ENCODE measurements at regions of chr1 and their contacts with region 1.

Region 1: DNA sequence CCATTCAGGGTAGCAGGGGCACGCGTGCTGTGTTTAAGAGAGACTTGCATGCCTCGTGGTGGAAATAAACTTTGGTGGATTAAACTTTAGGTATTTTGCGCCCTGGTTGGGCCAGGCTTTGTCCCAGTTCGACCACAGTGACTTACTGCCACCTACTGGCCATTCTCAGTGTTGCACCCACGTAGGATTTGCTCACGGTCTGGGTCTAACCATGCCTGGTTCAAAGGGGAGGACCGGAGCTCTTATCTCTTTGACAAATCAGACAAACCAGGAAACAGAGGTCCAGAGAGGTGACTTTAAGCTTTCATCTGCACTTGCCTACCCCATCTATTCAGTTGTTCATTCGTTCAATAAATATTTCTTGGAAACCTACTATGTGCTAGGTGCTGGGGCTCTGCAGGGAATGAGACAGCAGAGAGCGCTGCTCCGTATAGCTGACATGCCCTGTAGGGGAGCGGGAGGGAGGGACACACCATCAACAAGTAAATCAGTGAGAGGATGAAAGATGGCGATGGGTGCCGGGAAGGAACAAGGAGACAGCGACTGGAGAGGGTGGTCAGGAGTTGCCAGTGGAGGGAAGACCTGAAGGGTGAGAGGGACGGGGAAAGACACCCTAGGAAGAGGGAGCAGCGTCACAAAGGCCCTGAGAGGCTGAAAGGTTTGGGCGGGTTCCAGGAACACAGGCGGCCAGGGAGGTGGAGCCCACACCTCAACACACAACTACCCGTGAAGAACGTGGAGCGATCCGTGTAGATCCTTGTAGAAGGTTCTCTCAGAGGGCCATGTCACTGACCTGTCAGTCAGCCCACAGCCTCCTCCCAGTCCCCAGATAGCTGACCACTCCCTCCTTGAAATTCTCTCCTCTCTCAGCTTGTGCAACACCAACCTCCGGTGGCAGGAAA is 27.2 kb upstream of the TINAGL1 start:
- DNase-seq: peak; percentile 78 to 83 (median 81)
- H3K4me3 ChIP-seq: peak overlapping the region; percentile 38 to 74 (median 38)
- H3K4me3 Mint-ChIP-seq: peak overlapping the region; percentile 80 to 94
- H3K27ac ChIP-seq: peak overlapping the region; percentile 37 to 68
- H3K27ac Mint-ChIP-seq: peak overlapping the region; percentile 46 to 93 (median 76)
- H3K4me1 ChIP-seq: peaks cover 14 to 20% of the 10 kb centered on the region in 2 donors
- H3K4me1 Mint-ChIP-seq: peaks cover 17% of the 10 kb centered on the region
- H3K27me3 ChIP-seq: no peaks in the 10 kb centered on the region
- H3K27me3 Mint-ChIP-seq: peaks cover 0 to 3% (median 2%) of the 10 kb centered on the region in 3 donors
- CTCF ChIP-seq: peak; percentile 91

Region 2: DNA sequence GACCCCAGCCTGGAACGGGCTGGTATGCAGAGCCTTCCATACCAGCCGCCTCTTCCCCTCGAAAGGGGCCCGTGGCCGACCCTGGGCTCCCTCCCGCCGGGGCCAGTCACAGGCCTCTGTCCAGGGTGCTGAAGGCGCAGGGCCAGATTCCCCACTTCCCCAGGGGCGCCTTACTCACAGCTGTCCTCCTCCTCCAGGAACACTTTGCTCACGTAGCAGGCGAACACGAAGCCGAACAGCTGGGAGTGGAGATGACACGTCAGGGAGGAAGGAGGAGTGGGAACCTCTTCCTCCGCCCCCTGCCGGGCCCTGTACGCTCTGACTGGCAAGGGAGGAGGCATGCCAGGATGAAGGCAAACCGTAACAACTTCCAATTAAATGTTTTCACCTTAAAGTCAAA is 366.8 kb before region 1 on chr1:
- intact Hi-C with region 1: loop called in 1 of 2 experiments (anchors 10 kb)
- DNase-seq: peak; percentile 38 to 71 (median 46)
- H3K4me3 ChIP-seq: peak overlapping the region in 1 of 3 experiments; percentile 54
- H3K4me3 Mint-ChIP-seq: peak overlapping the region in 1 of 2 donors; percentile 75
- H3K27ac ChIP-seq: no peak overlapping the region
- H3K27ac Mint-ChIP-seq: no peak overlapping the region
- H3K4me1 ChIP-seq: peaks cover 11 to 14% of the 10 kb centered on the region in 2 donors
- H3K4me1 Mint-ChIP-seq: peaks cover 13% of the 10 kb centered on the region
- H3K27me3 ChIP-seq: peaks cover 0 to 2% of the 10 kb centered on the region in 2 donors
- H3K27me3 Mint-ChIP-seq: peaks cover 5 to 37% (median 24%) of the 10 kb centered on the region in 3 donors
- CTCF ChIP-seq: no peak

Region 3: GRCh38 chr1:31394628-31395193 is 154.4 kb before region 1 on chr1:
- intact Hi-C with region 1: loop called (anchors 1 to 5 kb)
- DNase-seq: peak; percentile 70 to 80 (median 74)
- H3K4me3 ChIP-seq: peak overlapping the region; percentile 20 to 76 (median 52)
- H3K4me3 Mint-ChIP-seq: peak overlapping the region; percentile 73 to 93
- H3K27ac ChIP-seq: no peak overlapping the region
- H3K27ac Mint-ChIP-seq: peak overlapping the region in 4 of 7 donors; percentile 57 to 73 (median 66)
- H3K4me1 ChIP-seq: peaks cover 13 to 26% of the 10 kb centered on the region in 2 donors
- H3K4me1 Mint-ChIP-seq: peaks cover 31% of the 10 kb centered on the region
- H3K27me3 ChIP-seq: no peaks in the 10 kb centered on the region
- H3K27me3 Mint-ChIP-seq: peaks cover 2 to 4% (median 3%) of the 10 kb centered on the region in 3 donors
- CTCF ChIP-seq: peak; percentile 91

Region 4: GRCh38 chr1:31422505-31423319 is 126.4 kb before region 1 on chr1:
- intact Hi-C with region 1: loop called (anchors 1 to 10 kb)
- DNase-seq: peak; percentile 58 to 76 (median 68)
- H3K4me3 ChIP-seq: no peak overlapping the region
- H3K4me3 Mint-ChIP-seq: peak overlapping the region in 1 of 2 donors; percentile 15
- H3K27ac ChIP-seq: no peak overlapping the region
- H3K27ac Mint-ChIP-seq: peak overlapping the region in 3 of 7 donors; percentile 48 to 71 (median 54)
- H3K4me1 ChIP-seq: peaks cover 0 to 4% of the 10 kb centered on the region in 2 donors
- H3K4me1 Mint-ChIP-seq: peaks cover 8% of the 10 kb centered on the region
- H3K27me3 ChIP-seq: no peaks in the 10 kb centered on the region
- H3K27me3 Mint-ChIP-seq: peaks cover 7 to 16% (median 13%) of the 10 kb centered on the region in 3 donors
- CTCF ChIP-seq: peak; percentile 89

Region 5: GRCh38 chr1:31483012-31483946 is 65.9 kb before region 1 on chr1:
- intact Hi-C with region 1: loop called in 1 of 2 experiments (anchors 2 kb)
- DNase-seq: peak; percentile 95 to 99 (median 98)
- H3K4me3 ChIP-seq: no peak overlapping the region
- H3K4me3 Mint-ChIP-seq: peak overlapping the region in 1 of 2 donors; percentile 21
- H3K27ac ChIP-seq: peak overlapping the region; percentile 81 to 89
- H3K27ac Mint-ChIP-seq: peak overlapping the region; percentile 96 to 99 (median 98)
- H3K4me1 ChIP-seq: peaks cover 38 to 50% of the 10 kb centered on the region in 2 donors
- H3K4me1 Mint-ChIP-seq: peaks cover 47% of the 10 kb centered on the region
- H3K27me3 ChIP-seq: no peaks in the 10 kb centered on the region
- H3K27me3 Mint-ChIP-seq: peaks cover 0 to 2% (median 0%) of the 10 kb centered on the region in 3 donors
- CTCF ChIP-seq: no peak

Region 6: DNA sequence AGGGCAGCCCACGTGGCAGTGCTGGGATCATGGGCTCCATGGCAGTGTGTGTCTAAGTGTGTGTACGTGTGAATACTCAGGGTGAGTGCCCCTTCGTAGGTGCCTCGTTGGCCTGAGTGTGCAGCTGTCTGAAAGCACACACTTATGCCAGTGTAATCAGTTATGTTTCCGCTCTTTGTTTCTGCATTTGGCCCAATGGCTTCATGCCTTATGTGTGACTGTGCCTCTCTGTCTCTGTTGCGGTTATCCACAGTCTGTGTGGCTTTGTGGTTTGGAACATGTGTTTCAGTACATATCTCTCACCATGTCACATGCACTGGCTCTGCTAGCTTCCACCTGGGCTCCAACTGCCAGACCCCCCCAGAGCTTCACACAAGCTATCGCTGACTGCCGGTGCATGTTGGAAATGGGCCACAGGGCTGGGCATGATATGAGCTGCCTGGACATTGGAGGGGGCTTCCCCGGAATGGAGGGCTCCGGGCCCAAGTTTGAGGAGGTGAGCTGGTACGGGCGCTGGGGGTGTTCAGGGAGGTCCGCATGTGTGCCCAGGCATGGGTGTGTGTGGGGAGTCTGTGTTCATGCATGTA is 43.2 kb before region 1 on chr1:
- intact Hi-C with region 1: loop called (anchors 5 kb)
- DNase-seq: peak in 2 of 3 donors; percentile 54 to 58
- H3K4me3 ChIP-seq: no peak overlapping the region
- H3K4me3 Mint-ChIP-seq: no peak overlapping the region
- H3K27ac ChIP-seq: no peak overlapping the region
- H3K27ac Mint-ChIP-seq: peak overlapping the region in 3 of 7 donors; percentile 66 to 84 (median 77)
- H3K4me1 ChIP-seq: peaks cover 9 to 12% of the 10 kb centered on the region in 2 donors
- H3K4me1 Mint-ChIP-seq: peaks cover 28% of the 10 kb centered on the region
- H3K27me3 ChIP-seq: no peaks in the 10 kb centered on the region
- H3K27me3 Mint-ChIP-seq: peaks cover 10 to 12% (median 11%) of the 10 kb centered on the region in 3 donors
- CTCF ChIP-seq: no peak

Measured in CD14-positive monocyte (primary cell).